GM12878 (cell line): ENCODE measurements at regions of chr7 and their contacts with region 1.

Region 1: GRCh38 chr7:93231799-93232672 is at the start of gene VPS50:
- DNase-seq: peak; percentile 92
- ATAC-seq: peak; percentile 99
- H3K4me3 ChIP-seq: peak within 1 kb of the TSS; percentile 79
- H3K27ac ChIP-seq: peak within 1 kb of the TSS; percentile 30; the same call in 1 of the 2 replicates
- H3K4me1 ChIP-seq: 0 out of 2 replicates have a peak, but pooled peaks cover 3% of the 10 kb centered on the region
- H3K27me3 ChIP-seq: no peaks in the 10 kb centered on the region
- CTCF ChIP-seq: peak in 1 of 3 experiments; percentile 18; a peak in 1 of 6 replicates
- EP300 ChIP-seq: no peak
- POLR2A ChIP-seq: peak; percentile 73
- RAD21 ChIP-seq: no peak
- polyA plus RNA-seq, gene VPS50: 4.0 to 5.6 TPM

Region 2: DNA sequence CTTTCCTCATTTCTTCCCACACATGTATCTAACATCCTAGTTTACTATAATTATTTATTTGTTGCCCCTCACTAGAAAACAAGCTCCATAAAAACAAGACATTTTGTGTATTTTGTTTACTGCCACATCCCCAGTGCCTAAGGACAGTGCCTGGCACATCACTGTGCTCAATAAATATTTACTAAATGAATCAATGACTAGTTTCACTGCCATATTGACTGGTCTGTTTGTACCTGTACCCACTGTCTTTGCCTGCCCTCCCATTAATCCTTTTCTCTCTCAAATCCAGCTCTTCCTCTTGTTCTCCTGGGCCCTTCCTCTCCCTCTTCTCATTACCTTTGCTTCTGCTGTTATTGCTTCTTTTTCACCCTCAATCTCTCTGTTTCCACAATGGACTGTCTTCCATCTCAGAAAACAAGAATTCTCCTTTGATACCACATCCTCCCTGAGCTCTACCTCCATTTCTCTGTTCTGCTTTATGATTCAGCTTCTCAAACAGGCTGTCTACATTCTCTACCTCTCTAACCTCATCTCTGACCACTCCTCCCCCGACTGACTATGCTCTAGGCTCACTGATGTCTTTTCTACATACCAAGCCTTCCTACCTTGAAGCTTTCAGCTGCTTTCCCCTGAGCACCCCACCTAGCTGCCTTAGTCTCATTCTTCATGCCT is 633.6 kb before region 1 on chr7:
- CTCF ChIA-PET with region 1: no interaction called
- POLR2A ChIA-PET with region 1: no interaction called
- RAD21 ChIA-PET with region 1: no interaction called
- SMC1A ChIA-PET with region 1: no interaction called
- in situ Hi-C with region 1: loop called (anchors 10 kb)
- intact Hi-C with region 1: loop called (anchors 10 kb)
- DNase-seq: no peak
- ATAC-seq: peak; percentile 76
- H3K4me3 ChIP-seq: no peak overlapping the region
- H3K27ac ChIP-seq: no peak overlapping the region
- H3K4me1 ChIP-seq: no peaks in the 10 kb centered on the region
- H3K27me3 ChIP-seq: no peaks in the 10 kb centered on the region
- CTCF ChIP-seq: no peak
- EP300 ChIP-seq: no peak
- POLR2A ChIP-seq: no peak
- RAD21 ChIP-seq: no peak

Region 3: DNA sequence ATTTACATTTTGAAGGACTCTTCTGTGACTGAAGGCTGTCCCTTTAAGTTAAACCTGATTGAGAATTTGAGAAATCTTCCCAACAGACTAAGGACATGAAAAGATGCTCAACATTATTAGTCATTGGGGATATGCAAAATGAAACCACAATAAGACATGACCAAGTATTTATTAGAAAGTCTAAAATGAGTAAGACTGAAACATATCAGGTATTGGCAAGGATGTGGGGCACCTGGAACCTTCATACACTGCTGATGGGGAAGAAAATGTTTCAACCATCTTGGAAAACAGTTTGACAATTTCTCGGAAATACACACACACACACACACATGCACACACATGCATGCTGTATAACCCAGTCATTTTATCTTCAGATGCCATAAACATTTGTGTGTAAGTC is 263.5 kb before region 1 on chr7:
- CTCF ChIA-PET with region 1: no interaction called
- POLR2A ChIA-PET with region 1: no interaction called
- RAD21 ChIA-PET with region 1: no interaction called
- SMC1A ChIA-PET with region 1: no interaction called
- in situ Hi-C with region 1: no loop called
- intact Hi-C with region 1: no loop called
- DNase-seq: peak; percentile 15
- ATAC-seq: peak; percentile 87
- H3K4me3 ChIP-seq: no peak overlapping the region
- H3K27ac ChIP-seq: no peak overlapping the region
- H3K4me1 ChIP-seq: no peaks in the 10 kb centered on the region
- H3K27me3 ChIP-seq: no peaks in the 10 kb centered on the region
- CTCF ChIP-seq: no peak
- EP300 ChIP-seq: no peak; a peak in 1 of 4 replicates
- POLR2A ChIP-seq: no peak
- RAD21 ChIP-seq: 0 out of 2 replicates have a peak, but pooled peaks have one; percentile 4

Region 4: DNA sequence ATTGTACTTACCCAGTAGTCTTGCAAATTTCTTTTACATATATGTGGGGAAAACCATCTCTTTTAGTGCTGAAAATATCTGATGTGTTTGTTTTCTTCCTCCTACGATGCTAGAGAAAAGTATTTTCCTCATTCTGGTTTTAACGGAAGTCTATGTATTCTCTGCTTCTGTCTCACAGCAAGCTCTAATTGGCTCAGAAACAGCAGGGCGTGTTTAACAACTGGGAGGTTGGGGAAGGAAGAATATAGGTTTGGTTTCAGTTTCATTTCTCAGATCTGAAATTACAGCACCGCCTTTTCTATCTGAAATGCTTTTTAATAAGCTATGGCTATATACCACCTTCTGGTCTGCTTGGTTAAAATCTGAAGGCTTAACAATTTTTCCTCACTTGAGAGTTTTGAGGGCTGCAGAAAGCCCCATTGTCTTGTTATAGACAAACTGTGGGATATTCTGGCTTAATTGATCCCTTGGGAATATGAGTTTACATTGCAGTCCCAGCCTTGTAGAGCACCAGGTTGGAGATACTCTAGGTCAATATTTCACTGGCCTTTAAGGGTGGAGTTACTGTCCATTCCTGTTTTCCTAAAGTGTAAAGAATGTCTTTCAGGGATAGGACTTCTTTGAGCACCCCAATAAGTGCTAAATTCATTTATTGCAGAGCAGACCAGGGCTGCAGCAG is 114.0 kb before region 1 on chr7 and contains the start of gene SAMD9:
- CTCF ChIA-PET with region 1: interaction called, 26 read pairs
- POLR2A ChIA-PET with region 1: interaction called, 3 read pairs
- RAD21 ChIA-PET with region 1: interaction called, 6 read pairs
- SMC1A ChIA-PET with region 1: interaction called, 13 read pairs
- in situ Hi-C with region 1: no loop called
- intact Hi-C with region 1: no loop called
- DNase-seq: peak; percentile 77
- ATAC-seq: peak; percentile 97
- H3K4me3 ChIP-seq: peak within 1 kb of the TSS; percentile 73
- H3K27ac ChIP-seq: peak within 1 kb of the TSS; percentile 91
- H3K4me1 ChIP-seq: peaks cover 4% of the 10 kb centered on the region
- H3K27me3 ChIP-seq: no peaks in the 10 kb centered on the region
- CTCF ChIP-seq: no peak
- EP300 ChIP-seq: no peak; a peak in 1 of 4 replicates
- POLR2A ChIP-seq: no peak
- RAD21 ChIP-seq: no peak
- polyA plus RNA-seq, gene SAMD9: 6.4 to 8.3 TPM

Region 5: DNA sequence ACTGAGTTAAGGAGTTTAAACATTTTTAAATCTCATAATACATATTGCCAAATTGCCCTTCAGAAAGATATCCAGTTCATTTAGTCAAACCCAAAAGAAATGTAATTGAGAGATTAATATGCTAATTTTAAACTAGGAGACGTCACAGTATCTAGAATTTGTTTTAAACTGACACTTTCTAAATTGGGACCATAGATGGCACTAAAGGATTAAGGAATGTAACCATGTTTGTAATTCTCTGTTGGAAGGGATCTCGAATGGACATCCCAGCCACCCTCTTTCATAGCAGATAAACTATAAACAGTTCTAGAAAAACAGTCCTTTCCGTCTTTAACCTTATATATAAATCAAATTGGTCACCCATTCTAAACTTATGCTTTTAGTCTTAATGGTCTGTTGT is 53.8 kb before region 1 on chr7:
- CTCF ChIA-PET with region 1: interaction called, 17 read pairs
- POLR2A ChIA-PET with region 1: no interaction called
- RAD21 ChIA-PET with region 1: no interaction called
- SMC1A ChIA-PET with region 1: interaction called, 6 read pairs
- in situ Hi-C with region 1: no loop called
- intact Hi-C with region 1: loop called (anchors 5 kb)
- DNase-seq: no peak
- ATAC-seq: peak; percentile 46; the same call in 2 of the 3 replicates
- H3K4me3 ChIP-seq: no peak overlapping the region
- H3K27ac ChIP-seq: no peak overlapping the region
- H3K4me1 ChIP-seq: no peaks in the 10 kb centered on the region
- H3K27me3 ChIP-seq: no peaks in the 10 kb centered on the region
- CTCF ChIP-seq: peak in 1 of 3 experiments; percentile 38; a peak in 1 of 6 replicates
- EP300 ChIP-seq: no peak
- POLR2A ChIP-seq: no peak
- RAD21 ChIP-seq: 0 out of 2 replicates have a peak, but pooled peaks have one; percentile 9

Region 6: DNA sequence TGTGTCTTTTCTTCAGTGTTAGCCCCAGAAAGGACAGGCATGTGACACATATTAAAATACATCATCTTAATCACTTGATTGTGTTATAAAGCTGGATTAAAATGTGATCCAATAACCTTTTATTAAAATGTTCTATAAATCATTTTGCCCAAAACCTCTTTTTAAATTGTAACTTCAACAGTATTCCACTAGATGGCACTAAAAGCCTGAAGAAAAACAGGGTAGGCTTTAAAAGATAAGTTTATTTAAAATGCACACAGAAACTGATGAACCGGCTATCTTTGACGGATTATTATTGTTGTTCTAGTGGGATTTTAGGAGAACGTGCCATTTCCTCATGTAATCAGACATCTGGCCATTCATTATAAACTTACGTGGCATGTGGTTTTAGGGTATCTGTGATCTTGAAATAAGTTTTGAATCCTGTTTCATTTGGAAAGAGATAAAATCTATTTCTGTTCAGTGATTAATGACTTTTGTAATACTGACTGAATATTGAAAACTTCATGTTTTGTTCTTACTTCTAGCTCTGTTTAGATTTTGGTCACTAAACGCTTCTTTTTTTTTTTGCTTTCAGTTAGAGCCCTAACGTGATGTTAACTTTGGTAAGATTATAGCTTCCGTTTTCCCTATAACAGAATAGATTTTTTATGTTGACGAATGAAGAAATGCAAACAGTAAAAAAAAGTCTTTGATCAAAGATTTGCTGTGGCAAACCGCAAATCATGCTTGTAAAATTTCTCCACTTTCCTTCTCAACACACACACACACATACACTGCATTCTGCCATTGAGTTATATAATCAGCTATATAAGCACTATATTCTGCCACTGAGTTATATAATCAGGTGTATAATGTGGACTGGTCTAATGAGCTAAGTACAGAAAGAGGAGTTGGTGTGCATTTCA is 13.7 kb after region 1 on chr7:
- CTCF ChIA-PET with region 1: interaction called, 39 read pairs
- POLR2A ChIA-PET with region 1: interaction called, 3 read pairs
- RAD21 ChIA-PET with region 1: interaction called, 12 read pairs
- SMC1A ChIA-PET with region 1: interaction called, 8 read pairs
- in situ Hi-C with region 1: no loop called
- intact Hi-C with region 1: no loop called
- DNase-seq: no peak
- ATAC-seq: peak; percentile 34; the same call in 2 of the 3 replicates
- H3K4me3 ChIP-seq: no peak overlapping the region
- H3K27ac ChIP-seq: no peak overlapping the region
- H3K4me1 ChIP-seq: no peaks in the 10 kb centered on the region
- H3K27me3 ChIP-seq: no peaks in the 10 kb centered on the region
- CTCF ChIP-seq: peak; percentile 27 to 52 (median 46); a peak in 4 of 6 replicates
- EP300 ChIP-seq: no peak
- POLR2A ChIP-seq: no peak
- RAD21 ChIP-seq: peak; percentile 72